Naive thymus-derived CD8-positive, alpha-beta T cell (primary cell): ENCODE measurements at regions of chr7 and their contacts with region 1.

Region 1: GRCh38 chr7:75914730-75915585 is at the start of gene POR:
- DNase-seq: peak; percentile 92 to 99 (median 98)
- ATAC-seq: peak; percentile 84 to 93
- H3K4me3 Mint-ChIP-seq: peak within 1 kb of the TSS; percentile 90 to 96 (median 93)
- H3K27ac Mint-ChIP-seq: peak within 1 kb of the TSS; percentile 93 to 99 (median 98)
- H3K4me1 Mint-ChIP-seq: peaks cover 16 to 49% (median 41%) of the 10 kb centered on the region in 4 donors
- H3K27me3 Mint-ChIP-seq: no peaks in the 10 kb centered on the region
- polyA plus RNA-seq, gene POR: 32.6 to 51.0 (median 45.2) TPM

Region 2: DNA sequence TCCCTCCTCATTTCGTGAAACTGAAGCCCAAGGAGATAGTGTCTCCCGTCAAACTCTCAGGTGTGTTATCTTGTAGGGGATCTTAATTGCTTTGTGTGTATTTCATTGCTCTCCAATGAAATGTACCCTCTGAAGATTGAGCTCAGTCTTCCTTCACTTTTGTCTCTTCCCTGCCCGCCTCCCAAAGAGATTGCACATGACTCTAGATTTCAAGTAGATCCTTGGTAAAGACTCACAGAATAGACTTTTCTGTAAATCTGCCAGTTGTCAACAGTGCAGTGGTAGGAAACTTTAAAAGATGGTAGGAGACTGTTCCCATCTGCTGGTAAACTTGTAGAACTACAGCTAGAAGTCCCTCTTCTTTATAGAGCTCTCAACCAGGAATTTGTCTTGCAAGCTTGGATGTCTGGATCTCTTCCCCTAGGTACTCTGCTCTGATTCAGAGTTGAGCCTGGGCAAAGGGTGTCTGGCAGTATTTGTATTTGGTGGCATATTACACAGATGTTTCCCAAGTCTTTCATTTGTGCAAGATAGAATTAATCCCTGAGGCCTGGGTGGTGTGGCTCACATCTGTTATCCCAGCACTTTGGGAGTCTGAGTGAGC is 152.5 kb before region 1 on chr7:
- POLR2A ChIA-PET with region 1: no interaction called
- DNase-seq: peak in 3 of 10 donors; percentile 34 to 53 (median 51)
- ATAC-seq: peak; percentile 80 to 84
- H3K4me3 Mint-ChIP-seq: no peak overlapping the region
- H3K27ac Mint-ChIP-seq: no peak overlapping the region
- H3K4me1 Mint-ChIP-seq: peaks cover 4 to 8% (median 5%) of the 10 kb centered on the region in 4 donors
- H3K27me3 Mint-ChIP-seq: peaks cover 0 to 4% (median 0%) of the 10 kb centered on the region in 5 donors

Region 3: DNA sequence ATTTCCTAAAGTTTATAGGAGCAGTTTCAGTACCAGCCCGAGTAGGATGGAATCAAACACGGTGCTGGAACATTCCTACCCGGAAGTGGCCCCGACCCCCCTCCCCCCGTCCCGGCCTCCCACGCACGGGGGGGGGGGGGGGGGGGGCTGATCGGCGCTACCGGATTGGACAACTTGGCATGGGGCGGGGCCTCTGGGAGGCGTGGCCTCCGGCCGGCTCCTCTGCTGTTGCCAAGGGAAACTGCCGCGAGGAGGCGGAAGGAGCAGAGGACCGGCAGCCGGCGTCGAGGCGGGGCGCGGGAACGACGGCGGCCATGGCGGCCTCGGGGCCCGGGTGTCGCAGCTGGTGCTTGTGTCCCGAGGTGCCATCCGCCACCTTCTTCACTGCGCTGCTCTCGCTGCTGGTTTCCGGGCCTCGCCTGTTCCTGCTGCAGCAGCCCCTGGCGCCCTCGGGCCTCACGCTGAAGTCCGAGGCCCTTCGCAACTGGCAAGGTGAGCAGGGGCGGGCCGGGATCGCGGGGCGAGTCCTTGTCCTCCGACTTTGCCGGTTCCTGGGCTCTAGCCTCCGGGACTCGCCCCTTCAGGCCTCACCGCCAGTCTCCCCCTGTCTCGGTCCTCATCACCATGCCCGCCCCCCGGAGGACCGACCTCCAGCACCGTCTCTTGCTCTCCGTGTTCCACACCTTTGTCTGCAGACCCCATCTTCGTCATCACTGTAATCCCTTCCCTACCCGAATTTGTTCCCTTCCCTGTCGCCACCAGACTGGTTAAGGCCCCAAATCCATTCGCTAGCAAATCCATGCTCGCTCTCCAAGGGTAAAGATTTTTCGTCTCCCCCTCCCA is 36.0 kb before region 1 on chr7 and contains the start of gene RHBDD2:
- POLR2A ChIA-PET with region 1: interaction called, 33 read pairs
- DNase-seq: peak; percentile 82 to 98 (median 94)
- ATAC-seq: peak; percentile 90
- H3K4me3 Mint-ChIP-seq: peak within 1 kb of the TSS; percentile 93 to 99 (median 96)
- H3K27ac Mint-ChIP-seq: peak within 1 kb of the TSS; percentile 92 to 98 (median 97)
- H3K4me1 Mint-ChIP-seq: peaks cover 21 to 44% (median 37%) of the 10 kb centered on the region in 4 donors
- H3K27me3 Mint-ChIP-seq: no peaks in the 10 kb centered on the region
- polyA plus RNA-seq, gene RHBDD2: 73.7 to 89.0 (median 73.7) TPM

Region 4: DNA sequence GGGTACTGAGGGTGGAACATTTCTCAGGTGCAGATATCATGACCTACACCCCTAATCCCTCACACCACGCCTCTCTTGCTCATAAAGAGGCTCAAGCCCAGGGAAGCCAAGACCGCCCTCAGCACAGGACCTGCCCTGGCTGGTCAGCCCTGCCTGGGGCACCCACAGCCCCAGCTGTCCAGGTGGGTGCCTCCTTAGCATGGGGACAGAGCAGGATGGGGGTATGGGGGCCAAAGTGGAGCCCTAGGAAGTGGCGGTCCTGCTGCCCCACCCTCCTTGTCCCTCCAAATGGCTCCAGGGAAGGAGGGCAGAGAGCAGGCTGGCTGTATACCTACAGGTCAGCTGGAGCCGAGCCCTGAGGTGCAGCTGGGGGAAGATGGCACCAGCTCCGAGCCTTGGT is 15.9 kb before region 1 on chr7:
- POLR2A ChIA-PET with region 1: no interaction called
- DNase-seq: no peak
- ATAC-seq: no peak
- H3K4me3 Mint-ChIP-seq: no peak overlapping the region
- H3K27ac Mint-ChIP-seq: no peak overlapping the region
- H3K4me1 Mint-ChIP-seq: peaks cover 0 to 2% (median 0%) of the 10 kb centered on the region in 4 donors
- H3K27me3 Mint-ChIP-seq: no peaks in the 10 kb centered on the region

Region 5: DNA sequence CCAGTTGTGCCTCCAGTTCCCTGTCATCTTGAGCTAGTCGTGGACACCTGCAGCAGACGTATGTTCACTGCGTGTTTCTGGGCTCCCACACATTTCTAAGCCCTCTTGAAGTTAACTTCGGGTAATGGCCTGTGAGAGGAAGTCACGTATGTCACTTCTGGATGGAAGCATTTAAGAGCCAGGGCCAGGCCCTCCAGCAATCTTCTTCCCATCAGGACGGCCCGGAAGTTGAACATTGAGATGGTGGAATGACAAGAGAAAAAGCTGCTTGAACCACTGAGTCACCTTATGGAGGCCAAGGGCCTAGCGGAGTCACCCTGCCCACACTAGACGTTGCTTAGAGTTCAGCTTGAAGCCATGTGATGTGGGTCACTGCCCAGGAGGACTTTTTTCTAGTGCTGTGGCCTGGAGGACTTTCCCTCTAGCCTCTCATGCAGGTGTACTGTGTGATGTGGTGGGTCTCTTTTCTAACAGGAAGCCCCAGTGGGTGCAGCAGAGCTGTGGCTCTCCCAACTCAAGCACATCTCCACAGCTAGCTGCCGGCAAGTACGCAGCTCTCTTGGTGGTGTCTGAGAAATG is 13.5 kb after region 1 on chr7:
- POLR2A ChIA-PET with region 1: interaction called, 32 read pairs
- DNase-seq: peak in 8 of 10 donors; percentile 31 to 69 (median 58)
- ATAC-seq: peak; percentile 96 to 98
- H3K4me3 Mint-ChIP-seq: peak overlapping the region; percentile 24 to 80 (median 58)
- H3K27ac Mint-ChIP-seq: peak overlapping the region; percentile 53 to 92 (median 80)
- H3K4me1 Mint-ChIP-seq: peaks cover 12 to 45% (median 37%) of the 10 kb centered on the region in 4 donors
- H3K27me3 Mint-ChIP-seq: no peaks in the 10 kb centered on the region

Region 6: DNA sequence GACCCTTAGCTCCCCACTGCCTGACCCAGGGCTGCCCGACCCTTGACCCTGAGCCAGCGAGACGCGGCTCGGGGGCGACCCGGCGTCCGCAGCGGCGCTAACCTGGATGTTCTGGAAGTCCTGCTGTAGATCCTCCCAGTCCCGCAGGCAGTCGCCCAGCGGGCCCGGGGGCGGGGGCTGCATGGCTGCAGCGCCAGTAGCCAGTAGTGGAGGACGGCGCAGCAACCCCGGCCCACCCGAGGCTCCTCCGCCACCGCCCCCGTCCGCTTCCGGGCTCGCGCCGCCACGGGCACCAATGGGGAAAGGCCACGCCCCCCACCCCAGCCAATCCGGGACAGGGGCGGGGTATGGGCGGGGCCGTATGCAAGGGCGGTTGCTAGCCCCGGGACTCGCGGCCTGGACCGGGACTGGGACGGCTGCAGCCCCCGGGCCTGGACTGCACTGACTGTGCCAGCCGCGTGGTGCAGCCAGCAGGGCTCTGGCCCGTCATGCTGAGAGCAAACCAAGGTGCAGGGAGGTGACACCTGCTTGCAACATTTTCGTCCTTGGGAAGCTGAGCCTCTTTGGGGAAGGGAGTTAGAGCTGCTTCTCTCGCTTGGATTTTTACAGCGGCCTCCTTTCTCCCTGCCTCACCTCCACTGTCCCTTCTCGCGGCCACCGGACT is 79.6 kb after region 1 on chr7 and contains the start of gene TMEM120A:
- POLR2A ChIA-PET with region 1: interaction called, 18 read pairs
- DNase-seq: peak; percentile 87 to 98 (median 92)
- ATAC-seq: peak; percentile 97 to 99
- H3K4me3 Mint-ChIP-seq: peak within 1 kb of the TSS; percentile 59 to 84 (median 73)
- H3K27ac Mint-ChIP-seq: peak within 1 kb of the TSS in 7 of 10 donors; percentile 11 to 86 (median 46)
- H3K4me1 Mint-ChIP-seq: peaks cover 18 to 45% (median 31%) of the 10 kb centered on the region in 4 donors
- H3K27me3 Mint-ChIP-seq: no peaks in the 10 kb centered on the region
- polyA plus RNA-seq, gene TMEM120A: 12.2 to 15.6 (median 14.8) TPM

Region 7: GRCh38 chr7:76047811-76048667 is 133.1 kb after region 1 on chr7 and contains the starts of genes MDH2 and STYXL1:
- POLR2A ChIA-PET with region 1: interaction called, 22 read pairs
- DNase-seq: peak; percentile 74 to 93 (median 83)
- ATAC-seq: peak; percentile 85 to 91
- H3K4me3 Mint-ChIP-seq: peak within 1 kb of the TSS; percentile 94 to 99 (median 97)
- H3K27ac Mint-ChIP-seq: peak within 1 kb of the TSS; percentile 87 to 98 (median 97)
- H3K4me1 Mint-ChIP-seq: peaks cover 28 to 69% (median 61%) of the 10 kb centered on the region in 4 donors
- H3K27me3 Mint-ChIP-seq: no peaks in the 10 kb centered on the region
- polyA plus RNA-seq, gene MDH2: 131 to 153 (median 149) TPM
- polyA plus RNA-seq, gene STYXL1: 52.7 to 61.9 (median 55.7) TPM